ENCODE measurements at regions of chr13 and their contacts with region 1.

Region 1: GRCh38 chr13:49495783-49496762 is at the start of gene PHF11:
- DNase-seq: peak; percentile 94
- ATAC-seq: peak; percentile 84
- H3K4me3 Mint-ChIP-seq: peak within 1 kb of the TSS; percentile 92
- H3K27ac Mint-ChIP-seq: peak within 1 kb of the TSS; percentile 98
- H3K4me1 Mint-ChIP-seq: peaks cover 46% of the 10 kb centered on the region
- H3K27me3 Mint-ChIP-seq: no peaks in the 10 kb centered on the region
- CTCF ChIP-seq: no peak
- total RNA-seq, gene PHF11: 59.3 to 62.6 TPM

Region 2: GRCh38 chr13:49443704-49444523 is 52.2 kb before region 1 on chr13 and contains the starts of genes CAB39L and SETDB2:
- CTCF ChIA-PET with region 1: interaction called, 8 read pairs
- POLR2A ChIA-PET with region 1: interaction called, 47 read pairs
- intact Hi-C with region 1: loop called (anchors 2 kb)
- DNase-seq: peak; percentile 100
- ATAC-seq: peak; percentile 95
- H3K4me3 Mint-ChIP-seq: peak within 1 kb of the TSS; percentile 89
- H3K27ac Mint-ChIP-seq: peak within 1 kb of the TSS; percentile 95
- H3K4me1 Mint-ChIP-seq: peaks cover 43% of the 10 kb centered on the region
- H3K27me3 Mint-ChIP-seq: no peaks in the 10 kb centered on the region
- CTCF ChIP-seq: peak; percentile 30
- total RNA-seq, gene CAB39L: 2.6 to 3.1 TPM
- total RNA-seq, gene SETDB2: 11.3 to 11.5 TPM

Region 3: DNA sequence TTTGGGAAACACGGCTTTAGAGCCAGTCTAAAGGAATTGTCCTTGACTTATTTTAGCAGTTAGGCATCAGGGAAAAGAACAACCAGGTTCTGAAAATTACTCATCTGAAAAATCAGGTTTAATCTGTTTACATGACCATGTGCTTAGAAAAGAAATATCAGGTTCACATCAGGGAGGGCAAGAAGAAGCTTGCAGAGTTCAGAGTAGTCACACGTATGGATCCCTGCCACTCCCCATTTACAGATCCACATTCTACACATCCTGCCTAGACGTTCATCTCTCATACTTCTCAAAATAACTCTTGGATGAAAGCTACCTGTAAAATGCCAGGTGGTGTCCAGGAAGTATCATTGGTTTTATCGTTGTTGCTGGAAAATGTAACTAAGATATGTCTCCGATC is 14.3 kb before region 1 on chr13:
- CTCF ChIA-PET with region 1: interaction called, 5 read pairs
- POLR2A ChIA-PET with region 1: interaction called, 10 read pairs
- intact Hi-C with region 1: no loop called
- DNase-seq: no peak
- ATAC-seq: no peak
- H3K4me3 Mint-ChIP-seq: no peak overlapping the region
- H3K27ac Mint-ChIP-seq: no peak overlapping the region
- H3K4me1 Mint-ChIP-seq: no peaks in the 10 kb centered on the region
- H3K27me3 Mint-ChIP-seq: no peaks in the 10 kb centered on the region
- CTCF ChIP-seq: no peak

Region 4: GRCh38 chr13:49569956-49570689 is 74.0 kb after region 1 on chr13:
- CTCF ChIA-PET with region 1: no interaction called
- POLR2A ChIA-PET with region 1: no interaction called
- intact Hi-C with region 1: no loop called
- DNase-seq: peak; percentile 35
- ATAC-seq: peak; percentile 90
- H3K4me3 Mint-ChIP-seq: no peak overlapping the region
- H3K27ac Mint-ChIP-seq: peak overlapping the region; percentile 57
- H3K4me1 Mint-ChIP-seq: peaks cover 22% of the 10 kb centered on the region
- H3K27me3 Mint-ChIP-seq: no peaks in the 10 kb centered on the region
- CTCF ChIP-seq: no peak